Activated T-helper 1 cell treated with anti-CD3 and anti-CD28 coated beads, Interleukin-12 subunit alpha, Interleukin-12 subunit beta, Interleukin-2, Interleukin-4 antibody, amounts not matched to agents 30 ng/mL and 10 ng/mL and 1 ng/mL, durations not matched to agents 14 hours and 24 hours and 36 hours (primary cell): ENCODE measurements at regions of chr20 and their contacts with region 1.

Region 1: GRCh38 chr20:37095599-37096414 is at the start of gene RBL1:
- DNase-seq: peak; percentile 83
- H3K4me3 Mint-ChIP-seq: peak within 1 kb of the TSS; percentile 99
- H3K27ac Mint-ChIP-seq: peak within 1 kb of the TSS; percentile 100
- H3K4me1 Mint-ChIP-seq: peaks cover 37% of the 10 kb centered on the region
- H3K27me3 Mint-ChIP-seq: peaks cover 3% of the 10 kb centered on the region
- total RNA-seq, gene RBL1: 49.2 and 53.7 TPM in 2 replicates

Region 2: DNA sequence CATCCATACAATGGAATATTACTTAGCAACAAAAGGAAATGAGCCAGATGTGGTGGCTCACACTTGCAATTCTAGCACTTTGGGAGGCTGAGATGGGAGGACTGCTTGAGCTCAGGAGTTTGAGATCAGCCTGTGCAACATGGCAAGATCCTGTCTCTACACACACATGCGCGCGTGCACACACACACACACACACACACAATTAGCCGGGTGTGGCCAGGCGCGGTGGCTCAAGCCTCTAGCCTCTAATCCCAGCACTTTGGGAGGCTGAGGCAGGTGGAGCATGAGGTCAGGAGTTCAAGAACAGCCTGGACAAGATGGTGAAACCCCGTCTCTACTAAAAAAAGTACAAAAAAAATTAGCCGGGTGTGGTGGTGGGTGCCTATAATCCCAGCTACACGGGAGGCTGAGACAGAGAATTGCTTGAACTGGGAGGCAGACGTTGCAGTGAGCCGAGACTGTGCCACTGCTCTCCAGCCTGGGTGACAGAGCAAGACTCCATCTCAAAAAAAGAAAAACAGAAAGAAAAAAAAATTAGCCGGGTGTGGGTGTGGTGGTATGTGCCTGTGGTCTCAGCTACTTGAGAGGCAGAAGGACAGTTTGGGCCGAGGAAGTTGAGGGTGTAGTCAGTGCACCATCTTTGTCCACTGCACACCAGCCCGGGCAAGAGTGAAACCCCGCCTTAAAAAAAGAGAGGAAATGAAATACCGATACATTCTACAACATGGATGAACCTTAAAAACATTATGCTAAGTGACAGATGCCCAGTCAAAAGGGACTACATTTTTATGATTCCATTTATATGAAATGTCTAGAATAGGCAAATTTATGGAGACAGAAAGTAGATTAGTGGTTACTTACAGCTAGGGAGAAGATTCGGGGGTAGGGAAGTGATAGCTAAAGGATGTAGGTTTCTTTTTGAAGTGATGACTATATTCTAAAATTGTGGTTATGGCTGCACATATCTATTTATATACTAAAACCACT is 52.5 kb before region 1 on chr20:
- intact Hi-C with region 1: loop called (anchors 2 kb)
- DNase-seq: peak; percentile 40
- H3K4me3 Mint-ChIP-seq: peak overlapping the region; percentile 72
- H3K27ac Mint-ChIP-seq: peak overlapping the region; percentile 87
- H3K4me1 Mint-ChIP-seq: peaks cover 45% of the 10 kb centered on the region
- H3K27me3 Mint-ChIP-seq: no peaks in the 10 kb centered on the region

Region 3: DNA sequence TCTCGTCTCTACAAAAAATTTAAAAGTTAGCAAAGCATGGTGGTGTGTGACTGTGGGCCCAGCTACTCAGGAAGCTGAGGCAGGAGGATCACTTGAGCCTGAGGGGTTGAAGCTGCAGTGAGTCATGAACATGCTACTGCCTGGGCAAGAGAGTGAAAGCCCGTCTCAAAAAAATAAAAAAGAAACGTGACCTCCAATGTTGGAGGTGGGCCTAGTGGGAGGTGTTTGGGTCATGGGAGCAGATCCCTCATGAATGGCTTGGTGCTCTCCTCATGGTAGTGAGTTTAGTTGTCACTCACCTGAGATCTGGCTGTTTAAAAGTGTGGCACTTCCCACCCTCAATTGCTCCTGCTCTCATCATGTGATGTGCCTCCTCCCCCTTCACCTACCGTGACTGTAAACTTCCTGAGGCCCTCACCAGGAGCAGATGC is 24.3 kb before region 1 on chr20:
- intact Hi-C with region 1: loop called (anchors 1 kb)
- DNase-seq: peak; percentile 18
- H3K4me3 Mint-ChIP-seq: peak overlapping the region; percentile 58
- H3K27ac Mint-ChIP-seq: peak overlapping the region; percentile 81
- H3K4me1 Mint-ChIP-seq: peaks cover 40% of the 10 kb centered on the region
- H3K27me3 Mint-ChIP-seq: no peaks in the 10 kb centered on the region

Region 4: GRCh38 chr20:37475252-37475651 is 379.4 kb after region 1 on chr20:
- intact Hi-C with region 1: no loop called
- DNase-seq: no peak
- H3K4me3 Mint-ChIP-seq: no peak overlapping the region
- H3K27ac Mint-ChIP-seq: no peak overlapping the region
- H3K4me1 Mint-ChIP-seq: no peaks in the 10 kb centered on the region
- H3K27me3 Mint-ChIP-seq: peaks cover 8% of the 10 kb centered on the region

Region 5: DNA sequence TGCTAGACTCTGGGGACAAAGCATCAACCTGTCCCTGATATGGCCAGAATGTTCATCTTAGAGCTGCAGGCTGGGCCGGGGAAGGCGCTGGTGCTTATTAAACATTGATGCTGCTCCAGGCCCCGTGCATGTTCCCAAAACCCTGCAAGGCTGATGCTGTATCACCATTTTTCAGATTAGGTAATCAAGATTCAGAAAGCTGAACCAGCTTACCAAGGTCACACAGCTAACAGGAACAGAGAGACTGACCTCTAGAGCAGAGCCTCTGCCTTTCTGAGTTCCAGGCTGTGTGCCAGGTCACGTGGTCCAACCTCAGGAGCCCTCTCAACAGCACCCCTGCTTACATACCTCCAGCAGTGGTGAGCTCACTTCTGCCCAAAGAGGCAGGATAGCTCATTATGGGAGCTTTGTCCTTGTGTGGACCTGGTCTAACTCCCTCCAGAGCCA is 791.1 kb after region 1 on chr20:
- intact Hi-C with region 1: no loop called
- DNase-seq: no peak
- H3K4me3 Mint-ChIP-seq: no peak overlapping the region
- H3K27ac Mint-ChIP-seq: no peak overlapping the region
- H3K4me1 Mint-ChIP-seq: no peaks in the 10 kb centered on the region
- H3K27me3 Mint-ChIP-seq: peaks cover 2% of the 10 kb centered on the region